Heart right ventricle (tissue), 16 donors: ENCODE measurements at regions of chr1 and their contacts with region 1.

Region 1: GRCh38 chr1:28208818-28209441 is 23.9 kb downstream of the DNAJC8 start:
- DNase-seq: peak in 1 of 2 donors; percentile 52
- ATAC-seq: peak in 7 of 8 donors; percentile 69 to 85 (median 81)
- H3K4me3 ChIP-seq: no peak overlapping the region
- H3K27ac ChIP-seq: no peak overlapping the region
- H3K4me1 ChIP-seq: peaks cover 0 to 7% (median 0%) of the 10 kb centered on the region in 9 donors
- H3K27me3 ChIP-seq: no peaks in the 10 kb centered on the region
- CTCF ChIP-seq: peak; percentile 41 to 81 (median 75)

Region 2: DNA sequence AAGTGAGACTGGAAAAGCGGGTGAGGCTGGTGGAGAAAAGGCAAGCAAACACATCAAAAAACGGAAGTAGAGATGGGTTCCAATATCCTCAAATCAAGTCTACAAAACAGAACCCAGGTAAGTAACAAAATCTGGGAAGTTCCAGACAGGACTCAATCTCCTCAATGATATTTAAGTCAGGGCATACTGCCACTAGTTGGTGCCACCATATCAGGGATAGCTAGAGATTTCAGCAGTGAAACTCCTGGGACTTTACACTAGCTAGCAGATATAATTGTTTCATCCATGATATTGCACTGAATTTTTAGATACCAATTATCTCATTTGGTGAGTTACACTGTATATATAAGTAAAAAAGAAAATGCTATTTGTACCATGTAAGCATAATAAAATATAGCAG is 172.5 kb before region 1 on chr1:
- intact Hi-C with region 1: loop called in 2 of 10 experiments (anchors 5 to 10 kb)
- DNase-seq: no peak
- ATAC-seq: no peak
- H3K4me3 ChIP-seq: no peak overlapping the region
- H3K27ac ChIP-seq: no peak overlapping the region
- H3K4me1 ChIP-seq: peaks cover 0 to 5% (median under 1%) of the 10 kb centered on the region in 9 donors
- H3K27me3 ChIP-seq: no peaks in the 10 kb centered on the region
- CTCF ChIP-seq: peak in 7 of 9 donors; percentile 13 to 38 (median 24)

Region 3: DNA sequence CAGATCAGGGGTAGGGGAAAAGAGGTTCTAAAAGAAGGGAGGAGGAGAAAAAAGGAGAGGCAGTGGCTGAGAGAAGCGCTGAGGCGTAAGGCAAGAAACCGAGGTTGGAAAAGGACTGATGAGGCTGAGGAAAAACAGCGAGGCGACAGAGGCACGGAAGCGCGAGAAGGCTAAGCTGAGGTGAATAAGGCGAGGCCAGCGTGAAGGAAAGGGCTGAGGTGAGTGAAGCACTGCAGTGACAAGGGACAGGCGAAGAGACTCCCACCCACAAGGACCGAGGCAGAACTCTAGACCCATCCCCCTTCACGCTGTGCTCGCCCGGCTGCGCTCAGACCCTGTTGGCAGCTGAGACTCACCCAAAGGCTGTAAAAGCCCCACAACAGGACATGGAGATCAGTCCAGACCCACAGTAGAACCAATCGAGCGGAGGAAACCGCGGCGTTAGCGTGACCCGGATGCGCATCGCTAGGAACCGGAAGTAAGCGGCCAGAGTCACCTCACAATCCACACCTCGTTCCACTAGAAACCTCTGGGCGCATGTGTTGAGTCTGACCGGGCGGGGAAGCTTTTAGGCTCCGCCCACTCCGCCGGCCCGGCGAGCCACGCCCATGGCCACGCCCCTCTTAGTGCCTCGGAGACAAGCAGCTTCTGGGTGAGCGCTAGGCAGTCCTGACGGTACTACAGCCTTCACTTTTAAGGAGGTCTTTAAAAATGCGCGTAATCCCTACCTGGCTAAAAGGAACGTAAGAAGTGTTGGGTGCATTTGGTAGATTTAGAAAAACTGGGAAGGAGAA is 120.6 kb before region 1 on chr1 and contains the start of gene EYA3:
- intact Hi-C with region 1: loop called in 9 of 10 experiments (anchors 2 to 5 kb)
- DNase-seq: peak; percentile 97 to 98
- ATAC-seq: peak; percentile 99 to 100 (median 100)
- H3K4me3 ChIP-seq: peak within 1 kb of the TSS; percentile 35 to 94 (median 80)
- H3K27ac ChIP-seq: peak within 1 kb of the TSS; percentile 48 to 94 (median 86)
- H3K4me1 ChIP-seq: peaks cover 0 to 45% (median 33%) of the 10 kb centered on the region in 9 donors
- H3K27me3 ChIP-seq: peaks cover 0 to 8% (median 0%) of the 10 kb centered on the region in 7 donors
- CTCF ChIP-seq: no peak
- total RNA-seq, gene EYA3: 15.2 to 22.1 (median 17.7) TPM